Panc1 (cell line): ENCODE measurements at regions of chr10 and their contacts with region 1.

Region 1: GRCh38 chr10:28432210-28432676 is 100.7 kb upstream of the WAC start:
- DNase-seq: peak; percentile 17
- ATAC-seq: peak; percentile 89
- H3K4me3 ChIP-seq: peak overlapping the region in 1 of 2 experiments; percentile 23; a peak in 2 of 4 replicates
- H3K27ac ChIP-seq: no peak overlapping the region
- H3K4me1 ChIP-seq: no peaks in the 10 kb centered on the region
- H3K27me3 ChIP-seq: no peaks in the 10 kb centered on the region
- CTCF ChIP-seq: peak; percentile 79

Region 2: DNA sequence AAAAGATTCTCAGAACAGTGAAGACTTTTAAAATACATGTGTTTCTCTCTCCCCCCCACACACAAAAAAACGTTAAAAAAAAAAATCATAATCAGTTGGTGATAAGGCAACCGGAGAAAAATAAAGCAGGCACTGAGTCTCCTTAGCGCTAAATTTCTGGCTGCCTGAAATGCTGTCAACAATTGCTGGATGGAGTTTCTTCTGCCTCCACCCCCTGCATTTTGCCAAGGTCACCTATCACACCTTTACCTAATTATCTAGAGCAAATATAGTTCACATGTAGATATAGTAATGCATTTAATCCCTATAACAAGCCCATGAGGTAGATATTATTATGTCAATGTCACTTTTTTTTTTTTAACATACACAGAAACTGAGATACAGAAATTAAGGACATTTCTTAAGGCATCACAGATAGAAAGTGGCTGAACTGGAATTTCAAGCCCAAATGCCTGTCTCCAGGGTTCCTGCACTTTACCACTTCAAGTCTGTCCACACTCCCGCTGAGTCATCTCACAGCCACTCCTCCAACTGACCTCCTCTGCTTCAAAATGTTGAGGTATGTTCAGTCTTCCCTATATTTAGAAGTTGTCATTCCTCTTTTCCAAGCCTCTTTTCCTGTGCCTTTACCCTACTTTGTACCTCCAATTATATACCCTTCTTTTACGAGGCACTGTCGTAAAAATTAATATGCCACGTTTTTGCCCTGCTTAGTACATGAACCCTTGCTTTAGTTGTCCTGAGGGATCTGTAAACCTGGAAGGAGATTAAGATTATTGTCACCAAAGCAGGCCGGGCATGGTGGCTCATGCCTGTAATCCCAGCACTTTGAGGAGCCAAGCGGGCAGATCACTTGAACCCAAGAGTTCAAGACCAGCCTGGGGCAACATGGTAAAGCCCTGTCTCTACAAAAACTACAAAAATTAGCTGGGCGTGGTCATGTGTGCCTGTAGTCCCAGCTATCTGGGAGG is 56.6 kb before region 1 on chr10:
- CTCF ChIA-PET with region 1: no interaction called
- POLR2A ChIA-PET with region 1: no interaction called
- in situ Hi-C with region 1: no loop called
- intact Hi-C with region 1: no loop called
- DNase-seq: no peak
- ATAC-seq: no peak
- H3K4me3 ChIP-seq: no peak overlapping the region
- H3K27ac ChIP-seq: no peak overlapping the region
- H3K4me1 ChIP-seq: no peaks in the 10 kb centered on the region
- H3K27me3 ChIP-seq: no peaks in the 10 kb centered on the region
- CTCF ChIP-seq: no peak

Region 3: GRCh38 chr10:28520346-28520745 is 88.1 kb after region 1 on chr10:
- CTCF ChIA-PET with region 1: no interaction called
- POLR2A ChIA-PET with region 1: no interaction called
- in situ Hi-C with region 1: no loop called
- intact Hi-C with region 1: loop called (anchors 10 kb)
- DNase-seq: no peak
- ATAC-seq: no peak
- H3K4me3 ChIP-seq: no peak overlapping the region
- H3K27ac ChIP-seq: no peak overlapping the region
- H3K4me1 ChIP-seq: no peaks in the 10 kb centered on the region
- H3K27me3 ChIP-seq: no peaks in the 10 kb centered on the region
- CTCF ChIP-seq: no peak